CD4-positive, alpha-beta T cell (primary cell): ENCODE measurements at regions of chr12 and their contacts with region 1.

Region 1: DNA sequence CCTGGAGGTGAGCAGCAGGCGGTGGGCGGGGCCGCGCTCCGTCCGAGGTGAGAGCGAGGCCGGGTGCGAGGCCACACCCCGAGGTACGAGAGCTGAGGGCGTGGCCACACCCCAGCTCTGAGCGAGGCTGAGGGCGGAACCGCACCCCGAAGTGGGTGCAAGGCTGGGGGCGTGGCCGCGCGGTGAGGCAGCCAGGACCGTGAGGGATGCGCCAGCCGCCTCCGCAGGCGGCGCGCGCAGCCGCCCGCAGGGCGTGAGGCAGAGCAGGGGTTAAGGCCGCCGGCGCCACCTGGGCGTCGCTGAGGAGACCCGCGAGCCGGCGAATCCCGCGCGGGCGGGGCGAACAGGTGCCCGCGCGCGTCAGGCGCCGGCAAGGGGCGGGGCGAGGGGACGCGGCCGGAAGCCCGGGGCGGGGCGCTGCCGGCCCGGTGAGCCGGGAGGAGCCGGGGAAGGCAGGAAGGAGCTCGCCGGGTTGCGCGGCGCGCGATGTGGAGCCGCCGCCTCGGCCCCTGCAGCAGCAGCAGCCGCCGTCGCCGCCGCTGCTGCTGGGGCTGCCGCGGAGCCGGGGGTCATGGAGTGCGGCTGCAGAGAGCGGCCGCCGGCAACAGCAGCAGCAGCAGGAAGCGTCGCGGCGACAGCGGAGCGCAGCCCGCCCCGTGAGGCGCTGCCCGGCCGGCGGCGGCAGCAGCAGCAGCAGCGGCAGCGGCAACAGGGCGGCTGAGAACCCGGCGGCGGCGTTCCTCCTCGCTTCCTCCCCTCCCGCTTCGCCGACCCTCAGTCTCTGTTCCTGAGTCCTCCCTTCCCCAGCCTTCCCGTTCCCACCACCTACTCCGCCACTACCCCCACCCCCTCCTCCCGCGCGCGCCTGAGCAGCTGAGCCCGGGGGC is at the start of gene BICDL1:
- DNase-seq: peak; percentile 94 to 100 (median 98)
- ATAC-seq: peak; percentile 80
- H3K4me3 ChIP-seq: peak within 1 kb of the TSS; percentile 70
- H3K4me3 Mint-ChIP-seq: peak within 1 kb of the TSS; percentile 95
- H3K27ac ChIP-seq: peak within 1 kb of the TSS; percentile 76 to 90
- H3K27ac Mint-ChIP-seq: peak within 1 kb of the TSS; percentile 97
- H3K4me1 ChIP-seq: peaks cover 24% of the 10 kb centered on the region
- H3K4me1 Mint-ChIP-seq: peaks cover 42% of the 10 kb centered on the region
- H3K27me3 ChIP-seq: no peaks in the 10 kb centered on the region
- H3K27me3 Mint-ChIP-seq: no peaks in the 10 kb centered on the region
- CTCF ChIP-seq: no peak
- total RNA-seq, gene BICDL1: 143 to 146 TPM

Region 2: DNA sequence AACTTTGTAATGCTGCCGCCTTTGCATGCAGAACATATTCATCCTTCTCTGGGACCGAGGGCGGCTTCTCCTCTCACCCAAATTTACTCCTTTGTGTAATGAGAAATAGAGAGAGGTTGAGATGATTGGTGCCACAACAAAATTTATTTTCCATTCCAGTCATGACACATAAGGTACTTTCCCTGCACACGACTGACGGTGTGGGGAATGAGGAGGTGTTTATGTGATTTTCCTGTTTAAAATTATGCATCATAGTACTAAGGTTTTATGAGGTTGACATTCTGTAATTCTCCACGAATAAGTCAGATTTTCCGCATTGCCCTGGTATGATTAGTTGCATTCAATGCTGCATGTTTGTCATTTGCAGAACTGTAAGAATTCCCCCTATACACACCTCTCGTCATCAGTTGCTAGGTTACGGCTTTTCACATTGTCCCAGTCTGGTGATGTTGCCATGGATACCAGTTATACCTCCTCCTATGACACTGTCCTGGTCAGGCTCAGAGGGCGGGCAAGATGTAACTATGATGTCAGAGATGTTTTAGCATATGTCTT is 23.1 kb after region 1 on chr12:
- CTCF ChIA-PET with region 1: interaction called, 33 read pairs
- POLR2A ChIA-PET with region 1: interaction called, 106 read pairs
- intact Hi-C with region 1: loop called (anchors 1 to 2 kb)
- DNase-seq: peak; percentile 27 to 98 (median 62)
- ATAC-seq: peak; percentile 57
- H3K4me3 ChIP-seq: peak overlapping the region; percentile 21
- H3K4me3 Mint-ChIP-seq: peak overlapping the region; percentile 76
- H3K27ac ChIP-seq: peak overlapping the region; percentile 86 to 96
- H3K27ac Mint-ChIP-seq: peak overlapping the region; percentile 96
- H3K4me1 ChIP-seq: peaks cover 75% of the 10 kb centered on the region
- H3K4me1 Mint-ChIP-seq: peaks cover 81% of the 10 kb centered on the region
- H3K27me3 ChIP-seq: no peaks in the 10 kb centered on the region
- H3K27me3 Mint-ChIP-seq: no peaks in the 10 kb centered on the region
- CTCF ChIP-seq: no peak

Region 3: DNA sequence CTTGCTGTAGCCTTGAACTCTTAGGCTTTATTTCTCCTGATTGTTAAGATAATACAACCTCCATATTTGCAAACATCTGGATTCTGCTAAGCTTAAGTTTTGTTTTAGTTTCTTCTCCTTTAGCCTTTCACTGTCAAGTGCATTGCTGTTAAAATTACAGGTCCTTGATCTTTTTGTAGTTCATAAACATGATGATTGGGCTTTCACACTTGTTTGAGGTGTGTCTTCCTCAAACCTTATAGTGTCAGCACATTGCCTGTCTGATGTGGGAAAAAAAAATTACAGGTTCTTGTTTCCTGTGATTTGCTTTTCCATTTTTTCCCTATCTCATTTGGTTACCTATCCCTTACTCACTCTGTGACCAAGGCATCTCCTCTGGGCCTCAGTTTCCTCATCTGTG is 59.2 kb after region 1 on chr12:
- CTCF ChIA-PET with region 1: no interaction called
- POLR2A ChIA-PET with region 1: interaction called, 14 read pairs
- intact Hi-C with region 1: loop called in 1 of 2 experiments (anchors 10 kb)
- DNase-seq: peak in 3 of 14 experiments; percentile 40 to 63 (median 41)
- ATAC-seq: peak; percentile 82
- H3K4me3 ChIP-seq: no peak overlapping the region
- H3K4me3 Mint-ChIP-seq: peak overlapping the region; percentile 21
- H3K27ac ChIP-seq: peak overlapping the region; percentile 23 to 58
- H3K27ac Mint-ChIP-seq: peak overlapping the region; percentile 84
- H3K4me1 ChIP-seq: peaks cover 9% of the 10 kb centered on the region
- H3K4me1 Mint-ChIP-seq: peaks cover 35% of the 10 kb centered on the region
- H3K27me3 ChIP-seq: no peaks in the 10 kb centered on the region
- H3K27me3 Mint-ChIP-seq: no peaks in the 10 kb centered on the region
- CTCF ChIP-seq: no peak

Region 4: GRCh38 chr12:120116792-120117651 is 128.0 kb after region 1 on chr12:
- CTCF ChIA-PET with region 1: interaction called, 8 read pairs
- POLR2A ChIA-PET with region 1: interaction called, 38 read pairs
- intact Hi-C with region 1: loop called in 1 of 2 experiments (anchors 1 kb)
- DNase-seq: peak; percentile 96 to 99 (median 98)
- ATAC-seq: peak; percentile 75
- H3K4me3 ChIP-seq: peak overlapping the region; percentile 86
- H3K4me3 Mint-ChIP-seq: peak overlapping the region; percentile 91
- H3K27ac ChIP-seq: peak overlapping the region; percentile 94 to 95
- H3K27ac Mint-ChIP-seq: peak overlapping the region; percentile 84
- H3K4me1 ChIP-seq: peaks cover 61% of the 10 kb centered on the region
- H3K4me1 Mint-ChIP-seq: peaks cover 76% of the 10 kb centered on the region
- H3K27me3 ChIP-seq: no peaks in the 10 kb centered on the region
- H3K27me3 Mint-ChIP-seq: no peaks in the 10 kb centered on the region
- CTCF ChIP-seq: no peak

Region 5: GRCh38 chr12:120200364-120200800 is 211.4 kb after region 1 on chr12:
- CTCF ChIA-PET with region 1: interaction called, 6 read pairs
- POLR2A ChIA-PET with region 1: interaction called, 21 read pairs
- intact Hi-C with region 1: loop called in 1 of 2 experiments (anchors 10 kb)
- DNase-seq: peak in 1 of 14 experiments; percentile 50
- ATAC-seq: no peak
- H3K4me3 ChIP-seq: peak overlapping the region; percentile 94
- H3K4me3 Mint-ChIP-seq: peak overlapping the region; percentile 99
- H3K27ac ChIP-seq: peak overlapping the region; percentile 67 to 74
- H3K27ac Mint-ChIP-seq: peak overlapping the region; percentile 91
- H3K4me1 ChIP-seq: peaks cover 46% of the 10 kb centered on the region
- H3K4me1 Mint-ChIP-seq: peaks cover 47% of the 10 kb centered on the region
- H3K27me3 ChIP-seq: no peaks in the 10 kb centered on the region
- H3K27me3 Mint-ChIP-seq: no peaks in the 10 kb centered on the region
- CTCF ChIP-seq: no peak